B cell (primary cell): ENCODE measurements at regions of chr22 and their contacts with region 1.

Region 1: DNA sequence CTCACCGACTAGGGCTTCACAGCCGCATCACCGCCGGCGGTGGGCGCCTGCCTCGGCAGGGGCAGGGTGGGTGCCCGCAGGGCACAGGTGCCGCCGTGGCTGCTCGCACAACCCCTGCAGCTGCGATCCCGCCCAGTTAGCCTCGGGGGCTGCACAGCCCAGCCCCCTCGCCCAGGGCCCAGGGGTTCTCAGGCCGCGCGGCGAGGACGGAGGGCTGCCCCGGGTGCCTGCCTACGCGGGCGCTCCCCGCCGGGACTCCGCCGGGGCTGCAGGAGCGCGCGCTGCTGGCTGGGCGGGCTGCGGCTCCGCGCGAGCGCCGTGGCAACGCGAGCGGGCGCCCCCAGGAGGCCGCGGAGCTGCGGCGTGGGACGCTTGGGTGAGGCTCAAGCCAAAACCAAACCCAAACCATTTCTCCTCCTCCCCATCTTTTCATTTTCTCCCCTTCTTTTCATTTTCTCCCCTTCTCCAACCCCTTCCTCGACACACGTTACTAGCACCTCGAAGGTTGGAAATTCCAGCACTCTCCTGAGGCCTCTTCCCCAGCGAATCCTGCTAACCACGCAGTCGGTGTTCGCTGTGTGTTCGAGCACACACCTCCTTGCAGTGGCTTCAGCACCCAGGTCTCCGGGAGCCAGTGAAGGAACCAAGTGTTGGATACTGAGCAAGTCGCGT is at the start of gene MICAL3:
- DNase-seq: peak; percentile 88
- ATAC-seq: peak; percentile 95
- H3K4me3 ChIP-seq: peak within 1 kb of the TSS; percentile 61 to 80 (median 76)
- H3K4me3 Mint-ChIP-seq: peak within 1 kb of the TSS; percentile 98
- H3K27ac ChIP-seq: peak within 1 kb of the TSS in 1 of 2 donors; percentile 53
- H3K27ac Mint-ChIP-seq: peak within 1 kb of the TSS; percentile 86
- H3K4me1 ChIP-seq: peaks cover 13 to 23% of the 10 kb centered on the region in 2 donors
- H3K4me1 Mint-ChIP-seq: peaks cover 22% of the 10 kb centered on the region
- H3K27me3 ChIP-seq: no peaks in the 10 kb centered on the region
- H3K27me3 Mint-ChIP-seq: no peaks in the 10 kb centered on the region
- CTCF ChIP-seq: peak; percentile 85
- total RNA-seq, gene MICAL3: 253 and 261 TPM in 2 replicates

Region 2: GRCh38 chr22:17830043-17830961 is 194.1 kb before region 1 on chr22:
- CTCF ChIA-PET with region 1: interaction called, 13 read pairs
- POLR2A ChIA-PET with region 1: no interaction called
- intact Hi-C with region 1: loop called (anchors 1 kb)
- DNase-seq: peak; percentile 84
- ATAC-seq: peak; percentile 94
- H3K4me3 ChIP-seq: no peak overlapping the region
- H3K4me3 Mint-ChIP-seq: no peak overlapping the region
- H3K27ac ChIP-seq: peak overlapping the region in 1 of 2 donors; percentile 3
- H3K27ac Mint-ChIP-seq: peak overlapping the region; percentile 61
- H3K4me1 ChIP-seq: peaks cover 0 to 7% of the 10 kb centered on the region in 2 donors
- H3K4me1 Mint-ChIP-seq: peaks cover 6% of the 10 kb centered on the region
- H3K27me3 ChIP-seq: no peaks in the 10 kb centered on the region
- H3K27me3 Mint-ChIP-seq: no peaks in the 10 kb centered on the region
- CTCF ChIP-seq: peak; percentile 99

Region 3: DNA sequence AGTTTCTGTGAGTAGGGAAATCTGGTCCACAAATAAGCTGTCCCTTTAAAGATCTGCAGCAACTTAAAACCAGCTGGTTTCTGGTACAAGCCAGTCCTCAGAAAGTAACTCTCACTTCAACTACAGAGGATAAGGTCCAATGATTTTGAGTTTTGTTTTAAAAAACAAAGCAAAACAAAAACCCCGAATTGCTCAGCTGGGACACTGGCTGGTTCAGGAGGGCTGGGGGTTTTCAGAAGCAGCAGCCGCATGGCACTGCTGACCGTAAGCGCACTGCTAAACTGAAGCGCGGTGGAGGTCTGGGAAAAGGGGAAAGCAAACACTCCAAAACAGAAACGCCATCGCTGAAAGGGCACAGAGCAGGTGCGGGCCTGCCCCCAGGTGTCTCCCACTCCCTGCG is 59.8 kb before region 1 on chr22:
- CTCF ChIA-PET with region 1: interaction called, 4 read pairs
- POLR2A ChIA-PET with region 1: no interaction called
- intact Hi-C with region 1: loop called (anchors 1 kb)
- DNase-seq: peak; percentile 81
- ATAC-seq: peak; percentile 86
- H3K4me3 ChIP-seq: peak overlapping the region in 3 of 5 experiments; percentile 18 to 44 (median 42)
- H3K4me3 Mint-ChIP-seq: peak overlapping the region; percentile 82
- H3K27ac ChIP-seq: peak overlapping the region; percentile 79 to 80
- H3K27ac Mint-ChIP-seq: peak overlapping the region; percentile 90
- H3K4me1 ChIP-seq: peaks cover 50 to 73% of the 10 kb centered on the region in 2 donors
- H3K4me1 Mint-ChIP-seq: peaks cover 82% of the 10 kb centered on the region
- H3K27me3 ChIP-seq: no peaks in the 10 kb centered on the region
- H3K27me3 Mint-ChIP-seq: no peaks in the 10 kb centered on the region
- CTCF ChIP-seq: no peak

Region 4: GRCh38 chr22:18001040-18001893 is 23.1 kb before region 1 on chr22:
- CTCF ChIA-PET with region 1: interaction called, 46 read pairs
- POLR2A ChIA-PET with region 1: interaction called, 5 read pairs
- intact Hi-C with region 1: loop called (anchors 1 kb)
- DNase-seq: peak; percentile 94
- ATAC-seq: peak; percentile 68
- H3K4me3 ChIP-seq: peak overlapping the region; percentile 56 to 87 (median 70)
- H3K4me3 Mint-ChIP-seq: peak overlapping the region; percentile 96
- H3K27ac ChIP-seq: peak overlapping the region; percentile 87 to 95
- H3K27ac Mint-ChIP-seq: peak overlapping the region; percentile 100
- H3K4me1 ChIP-seq: peaks cover 78 to 83% of the 10 kb centered on the region in 2 donors
- H3K4me1 Mint-ChIP-seq: peaks cover 77% of the 10 kb centered on the region
- H3K27me3 ChIP-seq: no peaks in the 10 kb centered on the region
- H3K27me3 Mint-ChIP-seq: no peaks in the 10 kb centered on the region
- CTCF ChIP-seq: peak; percentile 60

Region 5: DNA sequence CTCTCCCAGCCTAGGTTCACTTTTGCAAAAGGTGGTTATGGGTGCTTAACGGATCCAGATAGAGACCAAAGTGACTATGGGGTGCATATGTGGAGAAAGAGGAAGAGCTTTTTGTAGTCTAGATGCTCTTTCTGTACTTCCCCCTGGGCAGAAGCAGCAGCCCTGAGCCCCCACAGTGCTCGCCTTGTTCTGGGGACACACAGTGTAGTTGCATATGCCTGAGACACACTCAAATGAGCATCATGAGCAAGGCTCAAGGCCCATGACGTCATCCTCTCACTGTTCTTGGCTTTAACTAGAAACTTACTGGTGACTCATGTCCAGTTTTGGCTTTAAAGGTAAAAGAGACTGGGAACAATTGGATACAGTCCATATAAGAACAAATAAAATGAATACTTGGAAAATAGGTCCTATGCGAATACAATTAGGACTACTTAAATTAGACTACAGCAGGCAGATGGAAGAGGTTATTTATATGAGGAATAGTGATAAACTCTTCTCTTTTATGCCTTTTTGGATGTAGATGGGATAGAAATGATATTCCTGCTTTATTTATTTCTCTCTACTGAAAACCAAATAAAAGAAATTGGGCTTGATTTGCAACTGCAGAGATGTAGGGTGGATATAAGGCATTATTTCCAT is 33.3 kb after region 1 on chr22:
- CTCF ChIA-PET with region 1: interaction called, 10 read pairs
- POLR2A ChIA-PET with region 1: interaction called, 9 read pairs
- intact Hi-C with region 1: loop called (anchors 1 kb)
- DNase-seq: peak; percentile 93
- ATAC-seq: peak; percentile 81
- H3K4me3 ChIP-seq: peak overlapping the region in 4 of 5 experiments; percentile 27 to 47 (median 38)
- H3K4me3 Mint-ChIP-seq: peak overlapping the region; percentile 86
- H3K27ac ChIP-seq: peak overlapping the region; percentile 97 to 99
- H3K27ac Mint-ChIP-seq: peak overlapping the region; percentile 99
- H3K4me1 ChIP-seq: peaks cover 30 to 43% of the 10 kb centered on the region in 2 donors
- H3K4me1 Mint-ChIP-seq: peaks cover 41% of the 10 kb centered on the region
- H3K27me3 ChIP-seq: no peaks in the 10 kb centered on the region
- H3K27me3 Mint-ChIP-seq: no peaks in the 10 kb centered on the region
- CTCF ChIP-seq: no peak

Region 6: DNA sequence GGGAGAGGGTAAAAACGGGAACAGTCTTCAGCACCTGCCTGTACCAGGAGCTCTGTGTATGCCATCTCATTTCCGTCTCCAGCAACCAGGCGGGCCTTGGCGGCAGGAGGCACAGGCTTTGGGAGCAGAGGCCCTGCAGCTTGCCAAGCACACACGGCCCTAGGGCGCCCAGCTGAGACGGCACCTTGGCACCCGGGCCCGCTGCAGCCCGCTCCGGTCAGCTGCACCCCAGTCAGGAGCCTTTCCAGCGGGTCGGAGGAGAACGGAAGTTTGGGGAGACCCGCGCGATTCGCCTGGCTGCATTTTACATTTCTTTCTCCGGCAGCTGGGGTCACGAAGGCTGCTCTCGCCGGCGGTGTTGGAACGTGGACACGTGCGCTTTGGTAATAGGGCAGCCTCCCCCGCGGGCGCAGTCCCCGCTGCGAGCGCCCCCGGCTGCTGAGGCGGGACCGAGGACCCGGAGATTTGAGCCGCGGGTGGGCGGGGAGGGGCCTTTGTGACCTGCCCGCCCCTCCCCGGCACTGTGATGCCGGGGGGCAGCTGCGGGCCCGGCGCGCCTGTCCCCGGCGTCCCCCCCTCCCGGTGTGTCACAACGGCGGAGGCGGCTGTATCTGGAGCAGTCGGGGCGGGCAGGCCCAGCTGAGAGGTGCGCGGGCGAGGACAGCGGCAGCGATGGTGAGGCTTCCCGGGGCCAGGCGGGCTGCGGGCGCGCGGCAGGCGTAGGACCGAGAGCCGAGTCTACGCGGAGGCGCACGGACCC is 86.0 kb after region 1 on chr22 and contains the start of gene TUBA8:
- CTCF ChIA-PET with region 1: no interaction called
- POLR2A ChIA-PET with region 1: no interaction called
- intact Hi-C with region 1: no loop called
- DNase-seq: peak; percentile 31
- ATAC-seq: peak; percentile 36
- H3K4me3 ChIP-seq: peak within 1 kb of the TSS in 4 of 5 experiments; percentile 15 to 58 (median 34)
- H3K4me3 Mint-ChIP-seq: peak within 1 kb of the TSS; percentile 61
- H3K27ac ChIP-seq: no peak within 1 kb of the TSS
- H3K27ac Mint-ChIP-seq: no peak within 1 kb of the TSS
- H3K4me1 ChIP-seq: peaks cover 28 to 32% of the 10 kb centered on the region in 2 donors
- H3K4me1 Mint-ChIP-seq: peaks cover 24% of the 10 kb centered on the region
- H3K27me3 ChIP-seq: peaks cover 0 to 44% (median 14%) of the 10 kb centered on the region in 4 experiments
- H3K27me3 Mint-ChIP-seq: peaks cover 28% of the 10 kb centered on the region
- CTCF ChIP-seq: no peak
- total RNA-seq, gene TUBA8: 1.8 and 3.6 TPM in 2 replicates